Body of pancreas (tissue), 4 donors: ENCODE measurements at regions of chr7 and their contacts with region 1.

Region 1: DNA sequence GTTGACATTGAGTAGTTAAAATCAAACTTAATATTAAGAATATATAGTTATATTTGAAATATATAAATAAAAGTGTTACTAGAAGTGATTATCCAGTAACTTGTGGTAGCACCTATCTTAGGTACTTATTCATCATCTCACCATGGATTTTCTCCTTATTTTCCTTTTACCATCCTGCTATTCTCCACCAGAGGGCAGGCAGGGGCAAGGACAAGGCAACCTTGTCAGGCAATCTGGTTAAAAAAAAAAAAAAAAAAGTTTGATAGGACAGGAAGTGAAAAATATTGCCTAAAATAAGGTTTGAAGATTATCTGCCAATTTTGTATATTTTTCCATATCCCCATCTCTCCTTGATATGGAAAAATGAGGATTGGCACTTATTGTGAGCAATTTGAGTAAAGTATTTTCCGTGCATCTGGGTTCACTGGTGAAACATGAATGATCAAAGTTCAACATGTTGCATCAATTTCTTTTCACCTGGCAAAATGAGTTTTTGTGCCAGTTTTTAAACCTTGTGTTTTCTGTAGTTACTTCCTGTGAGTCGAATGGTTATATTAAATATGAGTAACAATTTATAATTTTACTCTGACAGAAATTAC is 256.7 kb downstream of the AGMO start:
- DNase-seq: peak; percentile 42 to 64 (median 56)
- ATAC-seq: peak; percentile 64
- H3K4me3 ChIP-seq: no peak overlapping the region
- H3K27ac ChIP-seq: no peak overlapping the region
- H3K4me1 ChIP-seq: no peaks in the 10 kb centered on the region
- H3K27me3 ChIP-seq: no peaks in the 10 kb centered on the region
- CTCF ChIP-seq: peak; percentile 26 to 72 (median 59)
- POLR2A ChIP-seq: no peak

Region 2: DNA sequence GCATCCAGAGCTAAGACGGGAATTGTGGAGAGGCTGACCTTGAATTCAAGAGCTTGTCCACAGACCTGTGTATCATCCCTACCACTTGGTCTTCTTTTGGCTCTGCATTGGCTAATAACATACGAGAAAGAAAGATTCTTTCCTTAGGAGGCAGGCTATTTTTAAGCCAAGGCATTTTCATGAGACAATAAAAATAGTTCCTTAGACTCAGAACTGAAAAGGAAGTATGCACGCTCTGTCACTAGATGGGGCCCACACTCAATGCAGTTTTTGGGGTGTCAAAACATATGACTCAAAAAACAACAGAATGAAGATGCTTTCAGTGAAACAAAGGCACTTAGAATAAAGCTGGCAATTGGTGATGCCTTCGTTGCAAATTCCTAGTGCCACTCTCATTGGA is 136.6 kb before region 1 on chr7:
- intact Hi-C with region 1: no loop called
- DNase-seq: no peak
- ATAC-seq: no peak
- H3K4me3 ChIP-seq: no peak overlapping the region
- H3K27ac ChIP-seq: no peak overlapping the region
- H3K4me1 ChIP-seq: no peaks in the 10 kb centered on the region
- H3K27me3 ChIP-seq: no peaks in the 10 kb centered on the region
- CTCF ChIP-seq: no peak
- POLR2A ChIP-seq: no peak

Region 3: DNA sequence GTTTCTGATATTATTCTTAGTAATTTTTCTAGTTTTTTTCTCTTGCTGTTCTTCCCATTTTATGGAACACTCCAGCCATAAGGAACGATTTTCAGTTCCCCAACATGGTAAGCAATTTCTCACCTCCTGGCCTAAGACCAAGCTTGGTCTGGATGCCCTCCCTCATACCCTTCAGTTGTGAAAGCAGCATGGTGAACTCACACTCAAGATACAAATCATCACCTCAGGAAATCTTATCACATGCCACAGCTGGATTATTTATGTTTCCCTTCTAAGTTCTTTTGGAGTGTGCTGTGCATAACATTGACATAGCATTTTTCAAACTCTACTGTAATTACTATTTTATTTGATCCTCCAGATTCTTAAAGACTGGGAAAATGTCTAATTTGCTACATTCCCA is 40.1 kb after region 1 on chr7:
- intact Hi-C with region 1: no loop called
- DNase-seq: no peak
- ATAC-seq: no peak
- H3K4me3 ChIP-seq: no peak overlapping the region
- H3K27ac ChIP-seq: no peak overlapping the region
- H3K4me1 ChIP-seq: no peaks in the 10 kb centered on the region
- H3K27me3 ChIP-seq: no peaks in the 10 kb centered on the region
- CTCF ChIP-seq: no peak
- POLR2A ChIP-seq: no peak

Region 4: DNA sequence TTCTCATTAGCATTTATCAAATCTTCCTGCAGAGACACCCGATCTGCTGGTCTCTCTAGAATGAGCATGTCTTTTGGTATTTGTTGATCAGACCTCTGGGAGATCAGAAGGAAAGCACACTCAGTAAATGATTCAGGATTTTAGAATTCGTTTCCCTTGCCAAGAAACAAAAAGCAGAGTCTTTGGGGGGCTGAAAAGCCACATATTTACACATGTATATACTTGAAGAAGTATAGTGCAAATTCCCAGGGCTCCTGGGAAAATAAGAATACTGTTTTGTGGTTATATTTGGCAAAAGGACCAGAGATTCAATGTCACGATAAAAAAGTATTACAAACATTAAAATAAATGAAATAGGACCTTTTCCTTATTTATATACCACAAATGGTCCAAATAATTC is 156.5 kb after region 1 on chr7:
- intact Hi-C with region 1: no loop called
- DNase-seq: no peak
- ATAC-seq: no peak
- H3K4me3 ChIP-seq: no peak overlapping the region
- H3K27ac ChIP-seq: no peak overlapping the region
- H3K4me1 ChIP-seq: no peaks in the 10 kb centered on the region
- H3K27me3 ChIP-seq: no peaks in the 10 kb centered on the region
- CTCF ChIP-seq: no peak
- POLR2A ChIP-seq: no peak

Region 5: DNA sequence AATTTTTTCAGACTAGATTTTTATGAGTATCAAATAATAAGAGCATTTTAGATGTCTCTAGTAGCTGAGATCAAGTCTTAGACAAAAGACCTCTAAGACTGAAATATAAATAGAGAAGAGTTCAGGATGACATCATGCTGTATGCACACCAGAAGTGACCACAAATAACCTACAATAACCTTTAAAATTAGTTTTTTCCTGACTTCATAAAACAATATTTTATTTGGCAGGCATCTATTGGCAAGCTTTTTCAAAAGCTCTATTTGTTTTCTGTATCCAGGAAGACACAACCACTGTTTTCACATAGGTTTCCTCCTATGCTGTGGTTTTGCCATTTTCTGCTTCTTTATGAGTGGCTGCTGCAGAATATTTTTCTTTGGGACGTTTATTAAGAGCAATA is 757.2 kb after region 1 on chr7:
- intact Hi-C with region 1: loop called (anchors 10 kb)
- DNase-seq: no peak
- ATAC-seq: no peak
- H3K4me3 ChIP-seq: no peak overlapping the region
- H3K27ac ChIP-seq: no peak overlapping the region
- H3K4me1 ChIP-seq: peaks cover 8% of the 10 kb centered on the region
- H3K27me3 ChIP-seq: no peaks in the 10 kb centered on the region
- CTCF ChIP-seq: no peak
- POLR2A ChIP-seq: no peak